Activated CD8-positive, alpha-beta T cell treated with anti-CD3 and anti-CD28 coated beads for 36 hours (primary cell): ENCODE measurements at regions of chr19 and their contacts with region 1.

Region 1: DNA sequence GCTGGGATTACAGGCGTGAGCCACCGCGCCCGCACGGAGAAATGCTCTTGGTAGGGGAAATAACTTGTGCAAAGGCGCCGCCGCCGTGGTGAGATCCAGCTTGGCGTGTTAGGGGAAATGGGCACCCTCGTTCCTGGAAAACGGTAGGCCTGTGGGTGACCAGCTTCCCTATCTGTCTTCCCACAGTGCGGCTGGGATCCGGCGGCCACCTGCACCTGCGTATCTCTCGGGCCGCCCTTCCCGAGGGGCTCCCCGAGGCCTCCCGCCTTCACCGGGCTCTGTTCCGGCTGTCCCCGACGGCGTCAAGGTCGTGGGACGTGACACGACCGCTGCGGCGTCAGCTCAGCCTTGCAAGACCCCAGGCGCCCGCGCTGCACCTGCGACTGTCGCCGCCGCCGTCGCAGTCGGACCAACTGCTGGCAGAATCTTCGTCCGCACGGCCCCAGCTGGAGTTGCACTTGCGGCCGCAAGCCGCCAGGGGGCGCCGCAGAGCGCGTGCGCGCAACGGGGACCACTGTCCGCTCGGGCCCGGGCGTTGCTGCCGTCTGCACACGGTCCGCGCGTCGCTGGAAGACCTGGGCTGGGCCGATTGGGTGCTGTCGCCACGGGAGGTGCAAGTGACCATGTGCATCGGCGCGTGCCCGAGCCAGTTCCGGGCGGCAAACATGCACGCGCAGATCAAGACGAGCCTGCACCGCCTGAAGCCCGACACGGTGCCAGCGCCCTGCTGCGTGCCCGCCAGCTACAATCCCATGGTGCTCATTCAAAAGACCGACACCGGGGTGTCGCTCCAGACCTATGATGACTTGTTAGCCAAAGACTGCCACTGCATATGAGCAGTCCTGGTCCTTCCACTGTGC is 2.4 kb downstream of the GDF15 start:
- DNase-seq: peak; percentile 83
- ATAC-seq: peak; percentile 90
- H3K4me3 Mint-ChIP-seq: peak overlapping the region; percentile 62
- H3K27ac Mint-ChIP-seq: no peak overlapping the region
- H3K4me1 Mint-ChIP-seq: peaks cover 6% of the 10 kb centered on the region
- H3K27me3 Mint-ChIP-seq: peaks cover 36% of the 10 kb centered on the region
- CTCF ChIP-seq: peak; percentile 100

Region 2: GRCh38 chr19:18251587-18252369 is 136.6 kb before region 1 on chr19:
- CTCF ChIA-PET with region 1: interaction called, 10 read pairs
- POLR2A ChIA-PET with region 1: no interaction called
- intact Hi-C with region 1: no loop called
- DNase-seq: peak; percentile 91
- ATAC-seq: peak; percentile 95
- H3K4me3 Mint-ChIP-seq: no peak overlapping the region
- H3K27ac Mint-ChIP-seq: no peak overlapping the region
- H3K4me1 Mint-ChIP-seq: peaks cover 2% of the 10 kb centered on the region
- H3K27me3 Mint-ChIP-seq: peaks cover 21% of the 10 kb centered on the region
- CTCF ChIP-seq: peak; percentile 90

Region 3: GRCh38 chr19:18328340-18329034 is 59.8 kb before region 1 on chr19:
- CTCF ChIA-PET with region 1: interaction called, 13 read pairs
- POLR2A ChIA-PET with region 1: no interaction called
- intact Hi-C with region 1: no loop called
- DNase-seq: peak; percentile 95
- ATAC-seq: peak; percentile 98
- H3K4me3 Mint-ChIP-seq: peak overlapping the region; percentile 74
- H3K27ac Mint-ChIP-seq: peak overlapping the region; percentile 72
- H3K4me1 Mint-ChIP-seq: peaks cover 19% of the 10 kb centered on the region
- H3K27me3 Mint-ChIP-seq: no peaks in the 10 kb centered on the region
- CTCF ChIP-seq: peak; percentile 90

Region 4: GRCh38 chr19:18364826-18365528 is 23.4 kb before region 1 on chr19:
- CTCF ChIA-PET with region 1: interaction called, 90 read pairs
- POLR2A ChIA-PET with region 1: no interaction called
- intact Hi-C with region 1: no loop called
- DNase-seq: peak; percentile 15
- ATAC-seq: no peak
- H3K4me3 Mint-ChIP-seq: no peak overlapping the region
- H3K27ac Mint-ChIP-seq: peak overlapping the region; percentile 10
- H3K4me1 Mint-ChIP-seq: no peaks in the 10 kb centered on the region
- H3K27me3 Mint-ChIP-seq: no peaks in the 10 kb centered on the region
- CTCF ChIP-seq: no peak

Region 5: DNA sequence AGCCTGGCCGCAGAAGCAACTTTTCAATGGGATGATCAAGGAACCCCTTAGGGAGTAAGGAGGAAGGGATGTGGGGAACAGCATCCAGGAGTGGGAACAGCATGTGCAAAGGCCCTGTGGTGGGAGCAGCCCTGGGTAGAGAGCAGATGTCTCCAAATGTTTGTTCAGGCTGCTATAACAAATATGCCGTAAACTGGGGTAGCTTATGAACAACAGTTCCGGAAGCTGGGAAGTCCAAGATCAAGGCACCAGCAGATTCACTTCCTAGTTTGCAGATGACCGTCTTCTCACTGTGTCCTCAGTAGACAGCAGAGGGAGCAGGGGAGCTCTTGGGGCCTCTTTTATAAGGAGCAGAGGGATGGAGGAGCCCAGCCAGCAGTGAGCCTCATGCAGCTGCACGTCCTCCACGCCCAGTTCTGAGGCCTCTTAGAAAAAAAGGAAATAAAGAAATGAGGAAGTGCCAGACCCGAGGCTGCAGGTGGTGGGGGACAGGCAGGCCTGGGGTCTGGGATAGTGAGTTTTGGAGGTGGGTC is 13.3 kb after region 1 on chr19:
- CTCF ChIA-PET with region 1: interaction called, 17 read pairs
- POLR2A ChIA-PET with region 1: interaction called, 3 read pairs
- intact Hi-C with region 1: no loop called
- DNase-seq: peak; percentile 21
- ATAC-seq: peak; percentile 42
- H3K4me3 Mint-ChIP-seq: no peak overlapping the region
- H3K27ac Mint-ChIP-seq: no peak overlapping the region
- H3K4me1 Mint-ChIP-seq: no peaks in the 10 kb centered on the region
- H3K27me3 Mint-ChIP-seq: peaks cover 8% of the 10 kb centered on the region
- CTCF ChIP-seq: no peak

Region 6: GRCh38 chr19:18478569-18479311 is 90.4 kb after region 1 on chr19:
- CTCF ChIA-PET with region 1: no interaction called
- POLR2A ChIA-PET with region 1: no interaction called
- intact Hi-C with region 1: no loop called
- DNase-seq: peak; percentile 94
- ATAC-seq: peak; percentile 93
- H3K4me3 Mint-ChIP-seq: peak overlapping the region; percentile 55
- H3K27ac Mint-ChIP-seq: peak overlapping the region; percentile 91
- H3K4me1 Mint-ChIP-seq: peaks cover 85% of the 10 kb centered on the region
- H3K27me3 Mint-ChIP-seq: no peaks in the 10 kb centered on the region
- CTCF ChIP-seq: no peak